ENCODE measurements at regions of chr19 and their contacts with region 1.

Region 1: GRCh38 chr19:19115954-19116353 is 22.3 kb downstream of the TMEM161A start:
- DNase-seq: peak in 2 of 3 donors; percentile 68 to 73
- ATAC-seq: peak; percentile 25 to 59 (median 52)
- H3K4me3 ChIP-seq: no peak overlapping the region
- H3K27ac ChIP-seq: no peak overlapping the region
- H3K4me1 ChIP-seq: peaks cover 0 to 17% (median 8%) of the 10 kb centered on the region in 4 donors
- H3K27me3 ChIP-seq: no peaks in the 10 kb centered on the region
- CTCF ChIP-seq: peak; percentile 52 to 66 (median 64)
- POLR2A ChIP-seq: no peak

Region 2: GRCh38 chr19:19053508-19054314 is 62.2 kb before region 1 on chr19:
- intact Hi-C with region 1: loop called (anchors 10 kb)
- DNase-seq: peak; percentile 83 to 86 (median 86)
- ATAC-seq: peak; percentile 72 to 79 (median 76)
- H3K4me3 ChIP-seq: peak overlapping the region in 2 of 3 donors; percentile 44 to 60
- H3K27ac ChIP-seq: peak overlapping the region in 2 of 3 donors; percentile 81 to 97
- H3K4me1 ChIP-seq: peaks cover 0 to 37% (median 7%) of the 10 kb centered on the region in 4 donors
- H3K27me3 ChIP-seq: no peaks in the 10 kb centered on the region
- CTCF ChIP-seq: peak; percentile 75 to 86 (median 84)
- POLR2A ChIP-seq: peak; percentile 47

Measured in right lobe of liver (tissue), 6 donors.